ENCODE measurements at regions of chr16 and their contacts with region 1.

Region 1: DNA sequence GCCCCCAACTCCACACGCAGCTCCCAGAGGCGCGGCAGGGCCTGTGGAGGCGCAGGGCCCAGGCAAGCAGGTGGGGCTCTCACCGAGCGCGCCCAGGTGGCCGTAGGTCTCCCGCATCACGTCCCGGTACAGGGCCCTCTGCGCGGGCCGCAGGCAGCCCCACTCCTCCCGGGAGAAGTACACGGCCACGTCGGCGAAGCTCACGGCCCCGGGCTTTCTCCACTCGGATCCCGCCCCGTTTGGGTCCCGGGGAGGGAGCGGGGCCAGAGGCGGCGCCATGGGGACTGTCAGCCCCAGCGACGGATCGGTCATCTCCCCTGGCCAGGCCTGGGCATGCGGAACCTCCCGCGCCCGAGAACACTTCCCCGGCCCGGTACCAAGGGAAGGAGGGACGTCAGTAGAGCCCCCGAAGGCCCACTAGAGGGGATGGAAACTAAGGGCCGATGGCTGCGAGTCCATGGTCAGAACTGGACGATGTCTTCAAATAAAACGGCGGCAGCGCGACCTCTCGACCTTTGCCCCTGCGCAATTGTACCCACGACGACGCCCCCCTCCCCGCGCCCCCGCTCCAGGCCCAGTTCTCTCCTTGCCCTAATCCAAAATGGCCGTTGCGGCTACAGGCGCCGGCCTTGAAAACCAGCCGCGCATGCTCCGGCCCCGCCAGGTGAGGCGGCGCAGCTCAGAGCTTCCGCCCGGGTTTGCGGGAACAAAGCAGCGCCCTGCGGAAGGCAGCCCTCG is at the start of gene ZNF747:
- DNase-seq: peak; percentile 70
- ATAC-seq: peak; percentile 87
- H3K4me3 ChIP-seq: peak within 1 kb of the TSS; percentile 60 to 79
- H3K27ac ChIP-seq: peak within 1 kb of the TSS; percentile 82
- H3K4me1 ChIP-seq: peaks cover 6 to 39% of the 10 kb centered on the region in 2 experiments; a peak in 3 of 4 replicates
- H3K27me3 ChIP-seq: no peaks in the 10 kb centered on the region
- CTCF ChIP-seq: no peak
- POLR2A ChIP-seq: no peak
- RAD21 ChIP-seq: no peak
- total RNA-seq, gene ZNF747: 2.1 TPM

Region 2: DNA sequence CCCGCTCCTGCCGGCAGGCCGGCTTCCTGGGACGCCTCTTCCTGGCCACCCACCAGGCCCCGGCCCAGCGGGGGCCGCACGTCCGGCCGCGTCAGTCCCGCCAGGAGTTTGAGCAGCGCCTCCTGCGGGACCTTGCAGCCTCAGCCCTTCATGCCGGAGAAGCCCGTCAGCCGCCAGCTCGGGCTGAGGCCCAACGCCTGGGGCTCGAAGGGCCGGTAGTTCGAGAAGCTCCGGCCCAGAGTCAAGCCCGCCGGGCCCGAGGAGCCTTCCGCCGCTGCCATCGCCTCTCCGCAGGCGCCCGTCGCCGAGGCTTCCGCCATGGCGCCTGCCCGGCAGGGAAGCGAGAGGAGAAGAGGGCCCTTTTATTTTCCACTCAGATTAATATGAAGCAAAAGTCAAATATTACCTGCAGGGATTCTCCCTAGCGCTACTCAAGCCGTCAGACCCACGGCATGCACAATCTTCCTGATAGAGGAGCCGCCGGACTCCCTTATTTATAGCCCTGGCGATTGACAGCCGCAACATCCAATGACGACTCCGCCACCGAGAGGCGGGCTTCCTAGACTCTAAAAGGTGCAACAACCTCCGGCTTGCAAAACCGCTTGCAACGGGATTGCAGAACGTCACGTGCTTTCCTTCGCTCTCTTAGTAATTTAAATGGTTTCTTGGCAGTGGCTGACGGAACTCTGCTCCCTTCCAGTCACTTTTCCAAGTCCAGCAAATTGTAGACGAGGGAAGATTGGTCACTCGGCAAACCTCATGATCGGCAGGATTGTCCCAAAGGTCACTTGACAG is 88.9 kb before region 1 on chr16 and contains the start of gene SEPHS2:
- CTCF ChIA-PET with region 1: interaction called, 11 read pairs
- POLR2A ChIA-PET with region 1: no interaction called
- RAD21 ChIA-PET with region 1: no interaction called
- intact Hi-C with region 1: no loop called
- DNase-seq: peak; percentile 96
- ATAC-seq: peak; percentile 92
- H3K4me3 ChIP-seq: peak within 1 kb of the TSS; percentile 80 to 90
- H3K27ac ChIP-seq: peak within 1 kb of the TSS; percentile 86
- H3K4me1 ChIP-seq: peaks cover 5 to 20% of the 10 kb centered on the region in 2 experiments
- H3K27me3 ChIP-seq: no peaks in the 10 kb centered on the region
- CTCF ChIP-seq: peak in 2 of 3 experiments; percentile 50 to 52; a peak in 5 of 6 replicates
- POLR2A ChIP-seq: peak; percentile 98
- RAD21 ChIP-seq: 0 out of 2 replicates have a peak, but pooled peaks have one; percentile 23
- total RNA-seq, gene SEPHS2: 51.3 TPM

Region 3: GRCh38 chr16:30557957-30558788 is 23.6 kb after region 1 on chr16 and contains the start of gene ZNF764:
- CTCF ChIA-PET with region 1: interaction called, 5 read pairs
- POLR2A ChIA-PET with region 1: interaction called, 20 read pairs
- RAD21 ChIA-PET with region 1: interaction called in 1 of 2 experiments, 4 read pairs
- intact Hi-C with region 1: no loop called
- DNase-seq: peak; percentile 97
- ATAC-seq: peak; percentile 97
- H3K4me3 ChIP-seq: peak within 1 kb of the TSS; percentile 79 to 94
- H3K27ac ChIP-seq: peak within 1 kb of the TSS; percentile 85
- H3K4me1 ChIP-seq: peaks cover 10 to 21% of the 10 kb centered on the region in 2 experiments
- H3K27me3 ChIP-seq: no peaks in the 10 kb centered on the region
- CTCF ChIP-seq: no peak
- POLR2A ChIP-seq: peak; percentile 88
- RAD21 ChIP-seq: no peak; the same call in 1 of the 2 replicates
- total RNA-seq, gene ZNF764: 9.1 TPM

Region 4: GRCh38 chr16:30602616-30603277 is 68.2 kb after region 1 on chr16:
- CTCF ChIA-PET with region 1: interaction called, 10 read pairs
- POLR2A ChIA-PET with region 1: no interaction called
- RAD21 ChIA-PET with region 1: no interaction called
- intact Hi-C with region 1: no loop called
- DNase-seq: no peak
- ATAC-seq: no peak
- H3K4me3 ChIP-seq: no peak overlapping the region
- H3K27ac ChIP-seq: no peak overlapping the region
- H3K4me1 ChIP-seq: peaks cover 0 to 5% of the 10 kb centered on the region in 2 experiments; a peak in 3 of 4 replicates
- H3K27me3 ChIP-seq: no peaks in the 10 kb centered on the region
- CTCF ChIP-seq: no peak
- POLR2A ChIP-seq: no peak
- RAD21 ChIP-seq: no peak